Activated CD8-positive, alpha-beta memory T cell treated with anti-CD3 and anti-CD28 coated beads, Interleukin-2, amount 10 ng/mL, durations not matched to agents 7 days and 5 days (primary cell): ENCODE measurements at regions of chr2 and their contacts with region 1.

Region 1: GRCh38 chr2:84888401-84889276 is 7.8 kb upstream of the TRABD2A start:
- DNase-seq: peak; percentile 84
- ATAC-seq: peak; percentile 92
- H3K4me3 Mint-ChIP-seq: peak overlapping the region; percentile 72
- H3K27ac Mint-ChIP-seq: peak overlapping the region; percentile 97
- H3K4me1 Mint-ChIP-seq: peaks cover 53% of the 10 kb centered on the region
- H3K27me3 Mint-ChIP-seq: no peaks in the 10 kb centered on the region

Region 2: GRCh38 chr2:84905181-84906107 is 16.8 kb after region 1 on chr2 and contains the start of gene TMSB10:
- CTCF ChIA-PET with region 1: interaction called, 26 read pairs
- DNase-seq: peak; percentile 91
- ATAC-seq: peak; percentile 73
- H3K4me3 Mint-ChIP-seq: peak within 1 kb of the TSS; percentile 85
- H3K27ac Mint-ChIP-seq: peak within 1 kb of the TSS; percentile 91
- H3K4me1 Mint-ChIP-seq: peaks cover 72% of the 10 kb centered on the region
- H3K27me3 Mint-ChIP-seq: no peaks in the 10 kb centered on the region
- total RNA-seq, gene TMSB10: 3,578 to 3,807 TPM